Dendritic cell treated with granulocyte-macrophage colony-stimulating factor and Interleukin-4, amounts not matched to agents 40 ng/mL and 50 ng/mL, for 4 days (primary cell): ENCODE measurements at regions of chr7 and their contacts with region 1.

Region 1: DNA sequence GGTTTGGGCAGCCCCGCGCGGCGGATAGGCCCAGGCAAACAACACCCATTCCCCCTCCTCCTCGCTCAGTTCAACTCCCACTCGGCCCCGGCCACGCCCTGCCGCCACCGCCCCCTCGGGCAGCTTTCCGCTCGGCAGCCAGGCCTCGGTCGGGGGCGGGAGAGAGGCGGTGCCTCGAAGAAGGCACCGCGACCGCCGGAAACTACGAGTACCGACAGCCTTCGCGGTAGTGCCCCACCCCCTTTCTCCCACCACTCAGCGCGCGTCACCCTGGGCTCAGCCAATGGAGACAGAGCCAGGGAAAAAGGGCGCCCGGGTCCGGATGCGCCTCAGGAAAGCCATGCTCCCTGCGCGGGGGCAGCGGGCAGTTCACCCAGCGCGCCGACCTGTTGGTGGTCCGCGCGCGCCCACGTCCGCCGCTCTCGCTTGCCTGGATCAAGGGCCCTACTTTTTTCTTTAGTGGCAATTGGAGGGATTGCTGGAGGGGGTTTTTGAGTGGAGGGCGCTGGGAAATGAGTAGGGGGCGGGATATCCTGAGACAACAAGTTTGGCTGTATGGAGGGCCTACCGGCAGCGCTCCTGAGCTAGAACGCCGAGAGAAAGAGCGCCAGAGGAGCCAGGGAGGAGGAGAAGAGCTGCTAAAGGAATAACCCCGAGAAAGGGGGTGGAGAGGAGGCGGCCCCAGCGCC is 557 bp upstream of the SP4 start:
- H3K4me3 Mint-ChIP-seq: peak overlapping the region; percentile 100
- H3K27ac Mint-ChIP-seq: peak overlapping the region; percentile 100
- H3K4me1 Mint-ChIP-seq: peaks cover 30% of the 10 kb centered on the region
- H3K27me3 Mint-ChIP-seq: no peaks in the 10 kb centered on the region

Region 2: DNA sequence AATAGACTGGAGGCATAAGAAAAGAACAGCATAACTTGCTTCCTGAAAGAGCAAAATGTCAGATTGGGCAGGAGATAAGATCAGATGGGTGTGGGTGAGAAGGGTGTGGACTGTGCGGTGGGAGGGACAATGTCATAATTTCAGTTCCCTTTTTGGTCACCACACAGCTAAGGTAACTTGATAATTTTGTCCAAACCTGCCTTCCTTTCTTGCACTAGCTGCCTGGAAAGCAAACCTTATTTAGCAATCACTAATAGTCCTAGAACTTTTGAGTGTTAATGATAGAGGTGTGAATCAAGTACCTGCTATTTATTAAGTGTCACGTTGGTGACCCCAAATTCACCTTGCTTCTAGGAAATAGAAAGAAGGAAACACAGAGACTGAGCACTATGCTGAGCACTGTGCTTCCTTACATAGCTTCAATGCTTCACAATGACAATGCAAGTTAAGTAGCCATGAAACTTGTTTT is 71.9 kb before region 1 on chr7:
- intact Hi-C with region 1: loop called (anchors 2 kb)
- H3K4me3 Mint-ChIP-seq: no peak overlapping the region
- H3K27ac Mint-ChIP-seq: peak overlapping the region; percentile 90
- H3K4me1 Mint-ChIP-seq: peaks cover 70% of the 10 kb centered on the region
- H3K27me3 Mint-ChIP-seq: no peaks in the 10 kb centered on the region

Region 3: DNA sequence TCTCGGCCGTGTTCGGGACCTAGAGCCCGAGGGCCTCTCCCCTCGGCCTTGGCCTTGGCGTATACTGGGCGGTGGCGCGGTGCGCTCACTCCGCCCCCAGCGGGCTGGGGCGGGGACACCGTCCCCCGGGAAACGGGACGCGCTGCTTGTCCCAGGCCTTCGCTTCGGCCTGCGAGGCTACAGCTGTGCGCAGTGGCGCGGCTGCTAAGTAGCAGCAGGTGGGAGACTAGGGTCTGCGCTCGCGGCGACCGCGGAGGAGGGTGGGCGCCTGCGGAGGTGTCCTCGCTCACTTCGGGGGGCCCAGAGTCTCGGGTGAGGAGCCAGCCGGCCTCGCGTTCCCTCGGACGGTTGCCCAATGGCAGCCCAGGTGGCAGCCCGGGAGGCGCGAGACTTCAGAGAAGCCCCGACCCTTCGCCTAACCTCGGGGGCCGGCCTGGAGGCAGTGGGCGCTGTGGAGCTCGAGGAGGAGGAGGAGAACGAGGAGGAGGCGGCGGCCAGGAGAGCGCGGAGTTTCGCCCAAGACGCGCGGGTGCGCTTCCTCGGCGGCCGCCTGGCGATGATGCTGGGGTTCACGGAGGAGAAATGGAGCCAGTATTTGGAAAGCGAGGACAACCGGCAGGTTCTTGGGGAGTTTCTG is 115.7 kb after region 1 on chr7 and contains the start of gene DNAH11:
- intact Hi-C with region 1: loop called (anchors 5 kb)
- H3K4me3 Mint-ChIP-seq: peak within 1 kb of the TSS; percentile 82
- H3K27ac Mint-ChIP-seq: peak within 1 kb of the TSS; percentile 43
- H3K4me1 Mint-ChIP-seq: peaks cover 38% of the 10 kb centered on the region
- H3K27me3 Mint-ChIP-seq: peaks cover 61% of the 10 kb centered on the region

Region 4: GRCh38 chr7:22114440-22114981 is 687.2 kb after region 1 on chr7:
- intact Hi-C with region 1: no loop called
- H3K4me3 Mint-ChIP-seq: no peak overlapping the region
- H3K27ac Mint-ChIP-seq: no peak overlapping the region
- H3K4me1 Mint-ChIP-seq: no peaks in the 10 kb centered on the region
- H3K27me3 Mint-ChIP-seq: no peaks in the 10 kb centered on the region

Region 5: GRCh38 chr7:22610951-22611757 is 1183.8 kb after region 1 on chr7:
- intact Hi-C with region 1: no loop called
- H3K4me3 Mint-ChIP-seq: no peak overlapping the region
- H3K27ac Mint-ChIP-seq: peak overlapping the region; percentile 39
- H3K4me1 Mint-ChIP-seq: peaks cover 20% of the 10 kb centered on the region
- H3K27me3 Mint-ChIP-seq: peaks cover 12% of the 10 kb centered on the region